BJ (cell line): ENCODE measurements at regions of chr1 and their contacts with region 1.

Region 1: GRCh38 chr1:209576798-209577197 is 6.7 kb upstream of the CAMK1G start:
- DNase-seq: no peak
- H3K4me3 ChIP-seq: no peak overlapping the region
- H3K27me3 ChIP-seq: peaks cover 2% of the 10 kb centered on the region; the same call in 1 of the 2 replicates
- CTCF ChIP-seq: peak; percentile 97

Region 2: DNA sequence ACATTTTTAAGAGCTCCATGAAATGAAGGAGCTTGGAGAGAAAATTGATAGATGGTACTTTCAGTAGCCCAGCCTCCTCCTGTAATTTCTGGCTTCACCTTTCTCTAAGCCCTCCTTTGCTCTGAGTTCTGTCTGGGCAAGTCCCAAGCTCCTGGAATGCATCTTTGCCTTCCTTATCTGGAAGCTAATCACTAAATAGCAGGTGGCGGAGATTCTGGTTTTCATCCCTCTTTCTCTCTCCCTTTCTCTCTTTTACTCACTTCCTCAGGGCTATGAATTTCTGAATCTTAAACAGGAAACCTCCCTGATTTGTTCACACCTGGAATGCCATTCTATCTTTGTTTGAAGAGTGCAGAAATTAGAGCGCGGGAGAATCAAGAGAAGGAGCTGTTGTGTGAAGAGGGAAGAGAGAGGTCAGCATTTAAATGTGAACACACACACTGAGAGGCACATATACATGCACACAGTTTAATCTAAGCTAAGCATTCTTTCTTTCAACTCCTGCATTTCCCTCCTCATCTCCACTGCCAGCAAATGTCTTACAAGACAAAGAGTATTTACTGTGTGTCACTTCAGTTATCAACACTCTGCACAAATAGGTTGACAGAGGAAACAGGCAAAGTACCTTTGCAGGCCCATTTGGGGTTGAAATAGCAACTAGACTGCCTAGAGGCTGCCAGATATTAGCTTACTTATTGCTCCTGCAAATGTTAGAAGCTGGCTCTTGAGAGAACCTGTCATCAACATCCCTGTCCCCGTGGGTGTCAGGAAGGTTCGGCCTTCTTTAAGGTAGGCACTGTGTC is 192.7 kb before region 1 on chr1:
- CTCF ChIA-PET with region 1: no interaction called
- POLR2A ChIA-PET with region 1: no interaction called
- DNase-seq: no peak
- H3K4me3 ChIP-seq: no peak overlapping the region
- H3K27me3 ChIP-seq: no peaks in the 10 kb centered on the region
- CTCF ChIP-seq: no peak

Region 3: DNA sequence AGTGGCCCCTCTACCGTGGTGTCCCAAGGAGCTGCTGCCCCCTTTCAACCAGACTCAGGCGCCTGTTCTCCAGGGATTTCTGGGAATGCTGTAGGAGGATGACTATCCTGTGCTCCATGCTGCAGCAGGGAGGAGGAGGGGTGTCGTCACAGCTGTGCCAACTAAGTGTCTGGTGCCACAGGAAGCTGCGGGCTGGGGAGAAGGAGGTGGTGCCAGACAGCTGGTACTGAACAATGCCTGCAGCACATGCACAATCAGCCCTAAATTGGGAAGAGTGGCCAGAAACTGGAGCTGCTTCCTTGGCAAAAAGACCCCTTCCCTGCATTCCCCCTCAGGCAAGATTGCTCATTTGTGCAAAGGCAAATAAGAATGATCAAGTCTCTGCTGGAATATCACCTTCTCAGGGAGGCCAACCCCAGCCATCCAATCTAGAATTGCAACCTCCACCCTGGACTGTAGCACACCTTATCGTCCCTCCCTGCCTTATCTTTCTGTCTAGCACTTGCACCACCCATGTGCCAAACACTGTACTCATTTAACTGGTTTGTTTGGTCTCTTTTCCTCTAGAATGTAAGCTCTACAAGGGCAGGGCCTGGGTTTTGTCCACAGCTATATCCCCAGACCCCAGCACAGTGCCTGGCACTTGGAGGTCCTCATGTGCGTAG is 42.1 kb after region 1 on chr1:
- CTCF ChIA-PET with region 1: interaction called, 154 read pairs
- POLR2A ChIA-PET with region 1: no interaction called
- DNase-seq: no peak
- H3K4me3 ChIP-seq: no peak overlapping the region
- H3K27me3 ChIP-seq: no peaks in the 10 kb centered on the region
- CTCF ChIP-seq: no peak

Region 4: GRCh38 chr1:209692745-209693504 is 116.1 kb after region 1 on chr1:
- CTCF ChIA-PET with region 1: interaction called, 20 read pairs
- POLR2A ChIA-PET with region 1: interaction called, 3 read pairs
- DNase-seq: peak; percentile 5
- H3K4me3 ChIP-seq: no peak overlapping the region
- H3K27me3 ChIP-seq: peaks cover 2% of the 10 kb centered on the region; the same call in 1 of the 2 replicates
- CTCF ChIP-seq: peak; percentile 80